ENCODE measurements at regions of chr1 and their contacts with region 1.

Region 1: DNA sequence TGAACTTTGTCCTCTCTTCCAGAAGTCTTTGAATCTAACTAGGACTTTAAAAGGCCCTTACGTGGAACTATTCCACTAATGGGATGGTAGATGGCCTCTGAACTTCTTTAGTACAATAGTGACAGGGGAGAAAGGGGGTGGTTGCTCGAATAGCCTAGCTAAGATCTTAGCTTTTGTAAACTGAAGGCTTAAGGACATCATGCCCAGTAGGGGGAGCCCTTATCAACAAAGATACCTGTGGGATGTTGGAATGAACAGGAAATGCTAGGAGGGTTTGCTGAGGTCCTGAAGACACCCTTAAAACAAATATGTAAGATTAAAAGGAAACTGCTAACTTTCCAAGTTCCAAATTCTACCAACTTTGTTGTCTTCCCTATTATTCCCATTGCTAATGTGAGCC is 33.2 kb downstream of the NHLH2 start:
- ATAC-seq: peak in 7 of 8 experiments; percentile 51 to 92 (median 72)
- H3K4me3 ChIP-seq: no peak overlapping the region
- H3K27ac ChIP-seq: no peak overlapping the region
- H3K4me1 ChIP-seq: peaks cover 4 to 12% of the 10 kb centered on the region in 2 donors

Region 2: GRCh38 chr1:115949156-115949555 is 141.4 kb after region 1 on chr1:
- in situ Hi-C with region 1: no loop called
- ATAC-seq: no peak
- H3K4me3 ChIP-seq: no peak overlapping the region
- H3K27ac ChIP-seq: no peak overlapping the region
- H3K4me1 ChIP-seq: no peaks in the 10 kb centered on the region

Region 3: DNA sequence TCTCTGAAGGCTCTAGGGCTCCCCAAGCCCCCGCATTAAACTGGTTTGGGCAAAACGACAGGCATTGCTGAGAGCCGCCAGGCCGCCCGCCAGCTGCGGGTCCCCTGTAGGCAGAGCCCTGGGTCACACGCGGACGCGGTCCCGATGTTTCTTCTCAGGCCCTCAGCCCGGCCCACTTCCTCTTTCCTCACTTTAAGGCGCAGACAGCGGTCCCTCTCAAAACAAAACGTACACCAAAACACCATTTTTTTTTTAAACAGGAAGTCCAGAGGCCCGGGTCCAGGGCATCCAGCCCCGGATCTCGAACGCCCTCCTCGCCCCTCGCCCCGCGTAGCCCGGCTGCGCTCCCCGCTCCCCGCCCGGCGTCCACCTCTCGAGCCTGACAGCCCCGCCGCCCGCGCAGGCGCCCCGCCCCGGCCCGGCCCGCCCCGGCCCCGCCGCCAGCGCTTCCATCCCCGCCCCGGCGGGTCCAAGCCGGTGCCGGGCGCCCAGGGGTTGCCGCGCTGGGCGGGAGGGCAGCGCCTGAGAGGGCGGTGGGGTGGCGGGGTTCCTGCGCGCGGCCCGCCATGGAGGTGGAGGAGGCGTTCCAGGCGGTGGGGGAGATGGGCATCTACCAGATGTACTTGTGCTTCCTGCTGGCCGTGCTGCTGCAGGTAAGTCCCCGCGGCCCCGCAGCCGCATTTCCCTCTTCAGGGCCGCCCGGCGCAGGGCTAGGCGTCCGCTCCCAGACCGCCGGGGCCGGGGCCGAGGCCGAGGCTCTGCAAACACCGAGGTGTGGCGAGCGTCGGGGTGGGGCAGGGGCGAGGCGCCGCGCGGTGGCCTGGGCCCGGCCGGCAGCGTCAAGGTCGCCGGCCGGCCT is 168.6 kb after region 1 on chr1 and contains the start of gene SLC22A15:
- in situ Hi-C with region 1: loop called in 3 of 9 experiments (anchors 10 to 25 kb)
- ATAC-seq: peak; percentile 72 to 90 (median 85)
- H3K4me3 ChIP-seq: peak within 1 kb of the TSS; percentile 38 to 58 (median 45)
- H3K27ac ChIP-seq: peak within 1 kb of the TSS; percentile 25 to 75
- H3K4me1 ChIP-seq: peaks cover 9 to 27% of the 10 kb centered on the region in 2 donors
- total RNA-seq, gene SLC22A15: 0.20 to 11.2 (median 7.0) TPM

Region 4: DNA sequence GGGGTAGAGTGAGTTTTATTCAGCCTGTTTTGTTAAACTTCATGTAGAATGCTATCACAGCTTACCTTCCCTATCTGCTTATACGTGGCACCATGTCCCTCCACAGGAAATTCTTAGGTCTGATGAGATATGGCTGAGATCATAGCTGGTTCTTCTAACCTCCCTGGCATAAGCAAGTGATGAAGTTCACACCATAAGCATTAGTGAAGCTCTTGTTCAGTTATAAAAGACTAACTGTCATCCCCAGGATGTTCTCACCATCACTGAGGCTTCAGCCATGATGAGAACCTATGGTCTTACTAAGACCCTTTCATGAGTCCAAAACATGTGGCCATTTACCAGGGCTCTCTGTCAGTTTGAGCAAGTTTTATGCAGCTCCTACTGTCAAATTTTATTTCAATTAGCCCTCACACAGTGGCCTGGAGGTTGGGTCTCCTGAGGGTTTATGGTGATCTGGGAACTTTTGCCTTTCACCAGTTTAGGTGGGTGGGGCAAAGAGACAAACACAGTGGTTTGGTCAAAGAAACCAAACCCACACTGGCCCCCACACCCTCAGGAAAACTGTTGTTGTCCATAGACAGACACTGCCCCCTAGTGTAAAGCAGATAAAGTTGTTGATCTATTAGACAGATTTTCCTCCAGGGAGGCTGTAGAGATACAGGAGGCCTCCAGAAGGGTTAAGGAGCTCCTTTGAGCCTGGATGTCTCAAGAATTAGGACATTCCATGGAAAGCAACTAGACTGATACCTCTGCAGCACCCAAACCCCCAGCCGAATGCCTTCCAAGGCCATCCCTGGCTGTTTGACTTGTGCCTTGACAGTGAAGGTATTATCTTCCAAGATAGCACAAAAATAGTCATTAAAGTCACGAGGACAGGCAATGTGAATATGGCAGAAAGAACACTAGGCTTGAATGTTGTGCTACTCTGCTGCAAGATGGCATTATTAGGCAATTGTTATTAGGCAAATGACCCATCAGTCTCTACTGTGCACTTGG is 173.6 kb after region 1 on chr1:
- in situ Hi-C with region 1: loop called in 3 of 9 experiments (anchors 10 to 25 kb)
- ATAC-seq: peak in 3 of 8 experiments; percentile 65 to 67 (median 67)
- H3K4me3 ChIP-seq: no peak overlapping the region
- H3K27ac ChIP-seq: no peak overlapping the region
- H3K4me1 ChIP-seq: peaks cover 9 to 23% of the 10 kb centered on the region in 2 donors